MCF 10A (cell line): ENCODE measurements at regions of chr1 and their contacts with region 1.

Region 1: DNA sequence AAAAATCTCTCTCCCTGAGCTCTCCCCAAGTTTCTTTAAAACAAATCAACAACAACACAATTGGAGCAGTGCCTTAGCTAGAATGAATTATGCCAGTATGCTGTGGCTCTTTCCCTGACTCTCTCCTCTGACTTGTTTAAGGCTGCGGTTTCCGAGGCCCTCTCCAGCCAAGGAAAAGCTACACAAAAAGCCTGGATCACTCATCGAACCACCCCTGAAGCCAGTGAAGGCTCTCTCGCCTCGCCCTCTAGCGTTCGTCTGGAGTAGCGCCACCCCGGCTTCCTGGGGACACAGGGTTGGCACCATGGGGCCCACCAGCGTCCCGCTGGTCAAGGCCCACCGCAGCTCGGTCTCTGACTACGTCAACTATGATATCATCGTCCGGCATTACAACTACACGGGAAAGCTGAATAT is 1.9 kb downstream of the S1PR1 start:
- DNase-seq: peak; percentile 93
- H3K4me3 Mint-ChIP-seq: peak overlapping the region; percentile 52
- H3K27ac Mint-ChIP-seq: no peak overlapping the region
- H3K4me1 Mint-ChIP-seq: peaks cover 32% of the 10 kb centered on the region
- H3K27me3 Mint-ChIP-seq: no peaks in the 10 kb centered on the region
- CTCF ChIP-seq: peak; percentile 89

Region 2: GRCh38 chr1:100931716-100932115 is 307.0 kb before region 1 on chr1:
- CTCF ChIA-PET with region 1: interaction called, 12 read pairs
- POLR2A ChIA-PET with region 1: interaction called, 3 read pairs
- intact Hi-C with region 1: no loop called
- DNase-seq: no peak
- H3K4me3 Mint-ChIP-seq: no peak overlapping the region
- H3K27ac Mint-ChIP-seq: no peak overlapping the region
- H3K4me1 Mint-ChIP-seq: no peaks in the 10 kb centered on the region
- H3K27me3 Mint-ChIP-seq: no peaks in the 10 kb centered on the region
- CTCF ChIP-seq: no peak

Region 3: DNA sequence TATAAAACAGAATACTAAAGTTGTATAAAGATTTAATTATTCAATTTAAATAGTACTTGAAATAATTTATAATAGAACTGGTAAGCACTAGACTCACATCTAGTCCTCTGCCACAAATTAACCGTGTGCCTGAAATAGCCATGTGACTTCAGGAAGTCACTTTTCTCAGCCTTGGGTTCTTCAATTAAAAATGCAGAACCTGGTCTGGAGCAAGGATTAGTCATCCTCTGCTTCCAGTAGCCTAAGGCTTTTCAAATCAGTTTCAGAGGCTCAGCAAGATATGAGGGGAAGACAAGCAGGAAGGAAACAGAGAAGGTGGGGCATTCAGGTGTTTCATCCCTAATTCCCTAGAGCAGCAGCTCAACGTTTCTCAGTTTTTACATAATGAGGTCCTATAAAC is 236.1 kb before region 1 on chr1:
- CTCF ChIA-PET with region 1: interaction called, 11 read pairs
- POLR2A ChIA-PET with region 1: interaction called, 9 read pairs
- intact Hi-C with region 1: loop called (anchors 5 kb)
- DNase-seq: peak; percentile 73
- H3K4me3 Mint-ChIP-seq: no peak overlapping the region
- H3K27ac Mint-ChIP-seq: peak overlapping the region; percentile 39
- H3K4me1 Mint-ChIP-seq: peaks cover 31% of the 10 kb centered on the region
- H3K27me3 Mint-ChIP-seq: no peaks in the 10 kb centered on the region
- CTCF ChIP-seq: no peak

Region 4: DNA sequence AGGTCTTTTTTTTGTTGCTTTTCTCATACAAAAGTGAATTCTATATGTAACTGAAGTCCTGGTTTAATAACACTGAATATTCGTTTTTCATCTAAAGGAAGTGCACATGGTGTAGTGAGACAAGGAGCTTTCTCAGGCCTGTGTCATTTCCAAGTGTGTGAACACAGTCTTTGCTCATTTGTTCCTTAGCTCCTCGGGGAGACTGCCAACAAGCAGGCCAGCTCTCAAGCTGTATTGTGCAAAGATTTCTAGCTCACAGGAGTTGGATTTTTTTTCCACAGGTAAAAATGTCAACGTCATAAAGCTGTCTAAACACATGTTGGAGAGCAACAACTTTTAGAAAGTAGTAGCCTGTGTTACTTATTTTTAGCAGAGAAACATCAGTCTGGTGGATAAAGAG is 89.7 kb before region 1 on chr1:
- CTCF ChIA-PET with region 1: interaction called, 4 read pairs
- POLR2A ChIA-PET with region 1: interaction called, 6 read pairs
- intact Hi-C with region 1: loop called (anchors 5 kb)
- DNase-seq: peak; percentile 44
- H3K4me3 Mint-ChIP-seq: no peak overlapping the region
- H3K27ac Mint-ChIP-seq: peak overlapping the region; percentile 61
- H3K4me1 Mint-ChIP-seq: peaks cover 19% of the 10 kb centered on the region
- H3K27me3 Mint-ChIP-seq: no peaks in the 10 kb centered on the region
- CTCF ChIP-seq: no peak

Region 5: DNA sequence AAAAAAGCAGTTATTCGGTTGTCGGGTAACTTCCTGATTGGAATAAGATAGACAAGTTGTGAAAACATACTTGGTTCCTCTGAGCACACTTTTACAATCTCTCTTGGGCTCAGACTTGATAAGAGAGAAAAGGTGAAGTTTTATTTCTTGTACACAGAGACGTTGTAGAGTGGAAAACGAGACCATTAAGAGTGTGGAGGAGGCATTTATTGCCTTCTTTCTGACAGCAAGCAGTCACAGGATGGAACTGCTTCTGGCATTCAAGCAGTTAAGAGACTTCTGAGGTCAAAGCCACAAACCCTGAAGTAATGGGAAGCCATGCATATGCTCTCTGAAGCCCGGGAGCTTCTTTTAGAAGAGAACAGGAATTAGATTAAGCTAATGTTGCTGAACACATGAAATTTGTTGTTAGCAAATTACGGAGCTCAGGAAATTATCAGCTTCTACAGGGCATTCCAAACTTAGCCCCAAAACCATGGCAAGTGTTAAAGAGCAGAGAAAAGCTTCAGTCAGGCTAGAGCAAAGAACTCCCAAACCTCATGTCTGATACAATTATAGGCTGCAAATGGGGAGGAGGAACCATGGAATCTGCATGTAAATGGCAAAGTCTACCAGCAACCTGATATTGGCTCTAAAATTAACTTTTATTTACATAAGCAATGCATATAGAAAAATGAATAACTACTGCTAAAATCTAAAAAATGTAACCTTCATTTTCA is 24.1 kb after region 1 on chr1:
- CTCF ChIA-PET with region 1: interaction called, 14 read pairs
- POLR2A ChIA-PET with region 1: no interaction called
- intact Hi-C with region 1: no loop called
- DNase-seq: no peak
- H3K4me3 Mint-ChIP-seq: no peak overlapping the region
- H3K27ac Mint-ChIP-seq: no peak overlapping the region
- H3K4me1 Mint-ChIP-seq: peaks cover 39% of the 10 kb centered on the region
- H3K27me3 Mint-ChIP-seq: no peaks in the 10 kb centered on the region
- CTCF ChIP-seq: no peak

Region 6: GRCh38 chr1:101309334-101310311 is 70.9 kb after region 1 on chr1:
- CTCF ChIA-PET with region 1: no interaction called
- POLR2A ChIA-PET with region 1: no interaction called
- intact Hi-C with region 1: no loop called
- DNase-seq: peak; percentile 56
- H3K4me3 Mint-ChIP-seq: peak overlapping the region; percentile 56
- H3K27ac Mint-ChIP-seq: no peak overlapping the region
- H3K4me1 Mint-ChIP-seq: peaks cover 6% of the 10 kb centered on the region
- H3K27me3 Mint-ChIP-seq: peaks cover 79% of the 10 kb centered on the region
- CTCF ChIP-seq: peak; percentile 69